Right ventricle myocardium superior (tissue), 1 donor: ENCODE measurements at regions of chr5 and their contacts with region 1.

Region 1: GRCh38 chr5:132190161-132190817 is 37.4 kb downstream of the P4HA2 start:
- DNase-seq: no peak
- ATAC-seq: peak; percentile 92

Region 2: DNA sequence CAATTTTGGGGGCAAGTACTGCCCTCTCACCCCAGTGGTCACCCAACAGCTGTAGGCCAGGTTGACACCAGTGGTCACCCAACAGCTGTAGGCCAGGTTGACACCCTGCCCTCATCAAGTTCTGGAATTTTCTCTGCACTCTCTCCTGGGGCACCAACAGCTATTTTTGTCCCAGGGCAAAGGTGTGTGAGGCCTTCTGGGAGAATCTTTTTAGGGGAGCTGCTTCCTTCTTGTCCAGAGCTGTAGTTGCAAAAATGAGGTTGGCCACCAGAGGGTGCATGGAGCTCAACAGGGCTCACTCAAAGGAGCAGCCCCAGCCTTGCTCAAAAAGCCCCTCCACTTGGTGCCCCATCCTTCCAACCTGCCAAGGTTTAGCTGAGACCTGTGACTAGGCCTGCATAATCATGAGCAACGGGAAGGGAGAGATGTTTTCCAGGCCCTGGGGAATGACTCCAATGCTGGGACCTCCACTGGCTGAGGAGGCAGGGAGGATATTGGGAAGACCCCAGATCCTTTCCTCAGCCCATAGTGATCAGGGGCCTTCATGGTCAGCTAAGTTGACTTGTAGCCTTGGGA is 48.0 kb after region 1 on chr5:
- intact Hi-C with region 1: no loop called
- DNase-seq: peak; percentile 77
- ATAC-seq: peak; percentile 89

Region 3: GRCh38 chr5:132369474-132370180 is 179.3 kb after region 1 on chr5 and contains the start of gene SLC22A5:
- intact Hi-C with region 1: loop called (anchors 10 kb)
- DNase-seq: peak; percentile 83
- ATAC-seq: peak; percentile 90
- total RNA-seq, gene SLC22A5: 22.7 TPM

Region 4: GRCh38 chr5:132456296-132457001 is 266.2 kb after region 1 on chr5:
- intact Hi-C with region 1: no loop called
- DNase-seq: peak; percentile 77
- ATAC-seq: peak; percentile 57